ENCODE measurements at regions of chr3 and their contacts with region 1.

Region 1: GRCh38 chr3:119769394-119770149 is 12.3 kb upstream of the NR1I2 start:
- DNase-seq: peak; percentile 99
- H3K4me3 ChIP-seq: peak overlapping the region in 1 of 3 experiments; percentile 51
- H3K27ac ChIP-seq: peak overlapping the region; percentile 100
- H3K4me1 ChIP-seq: peaks cover 25% of the 10 kb centered on the region
- H3K27me3 ChIP-seq: no peaks in the 10 kb centered on the region
- CTCF ChIP-seq: no peak
- POLR2A ChIP-seq: peak; percentile 48

Region 2: DNA sequence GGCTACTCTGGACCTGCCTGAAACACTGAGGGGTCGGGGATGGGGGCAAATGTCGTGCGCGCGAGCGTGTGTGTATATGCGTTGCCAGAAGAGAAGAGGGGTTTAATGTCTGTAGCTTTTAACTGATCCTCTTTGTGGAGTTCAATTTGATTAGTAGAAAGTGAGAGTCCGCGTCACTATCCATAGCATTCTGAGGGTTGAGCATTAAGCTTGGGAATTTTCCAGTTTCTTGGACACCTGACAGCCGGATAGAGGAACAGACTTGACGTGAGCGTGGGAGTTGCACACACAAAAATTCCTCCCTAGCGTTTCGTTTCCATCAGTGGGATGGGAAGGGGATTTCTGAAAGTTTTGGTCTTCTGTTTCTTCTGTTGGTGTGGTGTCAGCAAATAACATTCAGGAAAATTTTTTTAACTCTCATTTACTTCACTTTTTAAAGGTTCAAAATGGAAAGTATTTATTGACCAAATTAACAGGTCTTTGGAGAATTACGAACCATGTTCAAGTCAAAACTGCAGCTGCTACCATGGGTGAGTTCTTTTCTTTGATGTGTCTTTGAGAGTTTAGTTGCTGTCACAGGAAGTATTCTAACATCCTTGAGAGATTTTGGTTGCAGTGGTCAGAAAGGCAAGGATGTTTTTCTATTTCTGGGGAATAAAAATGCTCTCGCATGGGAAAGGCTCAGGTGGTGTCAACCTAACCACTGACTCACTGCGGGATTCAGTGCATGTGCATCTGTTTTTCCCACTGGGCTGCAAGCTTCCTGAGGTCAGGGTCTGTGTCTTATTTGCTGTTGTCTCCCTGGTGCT is 300.0 kb before region 1 on chr3:
- CTCF ChIA-PET with region 1: no interaction called
- POLR2A ChIA-PET with region 1: no interaction called
- dilution Hi-C with region 1: no loop called
- intact Hi-C with region 1: loop called (anchors 1 kb)
- DNase-seq: peak; percentile 62
- H3K4me3 ChIP-seq: peak overlapping the region; percentile 78 to 86 (median 80)
- H3K27ac ChIP-seq: peak overlapping the region; percentile 19
- H3K4me1 ChIP-seq: peaks cover 13% of the 10 kb centered on the region
- H3K27me3 ChIP-seq: no peaks in the 10 kb centered on the region
- CTCF ChIP-seq: no peak
- POLR2A ChIP-seq: no peak

Region 3: GRCh38 chr3:119637679-119638525 is 131.7 kb before region 1 on chr3:
- CTCF ChIA-PET with region 1: no interaction called
- POLR2A ChIA-PET with region 1: interaction called, 13 read pairs
- dilution Hi-C with region 1: no loop called
- intact Hi-C with region 1: no loop called
- DNase-seq: peak; percentile 91
- H3K4me3 ChIP-seq: no peak overlapping the region
- H3K27ac ChIP-seq: peak overlapping the region; percentile 80
- H3K4me1 ChIP-seq: peaks cover 34% of the 10 kb centered on the region
- H3K27me3 ChIP-seq: no peaks in the 10 kb centered on the region
- CTCF ChIP-seq: no peak
- POLR2A ChIP-seq: no peak

Region 4: DNA sequence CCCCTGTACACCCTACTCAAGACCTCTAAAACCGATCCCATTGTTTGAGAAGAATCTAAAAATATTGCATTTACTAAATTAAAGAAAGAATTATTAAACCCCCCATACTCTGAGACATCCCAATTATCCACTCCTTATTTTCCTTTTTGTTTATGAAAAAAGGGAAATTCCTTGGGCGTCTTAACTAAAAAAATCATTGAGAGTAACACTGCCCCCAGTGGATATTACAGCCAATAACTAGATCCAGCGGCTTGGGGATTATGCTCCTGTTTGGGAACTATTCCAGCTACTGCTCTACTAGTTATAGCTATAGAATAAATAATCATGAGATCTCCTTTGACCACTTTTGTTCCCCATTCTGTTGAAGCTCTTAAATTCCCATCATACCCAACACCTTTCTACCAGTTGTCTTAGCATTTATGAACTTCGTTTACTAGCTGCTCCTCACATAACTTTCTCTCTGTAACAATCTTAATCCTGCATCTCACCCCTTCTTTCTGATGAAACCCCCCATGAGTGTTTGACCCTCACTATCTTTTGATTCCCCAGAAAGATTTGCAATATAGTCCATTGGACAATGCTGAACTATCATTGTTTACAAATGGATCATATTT is 79.4 kb before region 1 on chr3:
- CTCF ChIA-PET with region 1: interaction called, 4 read pairs
- POLR2A ChIA-PET with region 1: no interaction called
- dilution Hi-C with region 1: no loop called
- intact Hi-C with region 1: loop called (anchors 1 kb)
- DNase-seq: peak; percentile 52
- H3K4me3 ChIP-seq: no peak overlapping the region
- H3K27ac ChIP-seq: no peak overlapping the region
- H3K4me1 ChIP-seq: no peaks in the 10 kb centered on the region
- H3K27me3 ChIP-seq: no peaks in the 10 kb centered on the region
- CTCF ChIP-seq: peak; percentile 38 to 45
- POLR2A ChIP-seq: no peak

Region 5: DNA sequence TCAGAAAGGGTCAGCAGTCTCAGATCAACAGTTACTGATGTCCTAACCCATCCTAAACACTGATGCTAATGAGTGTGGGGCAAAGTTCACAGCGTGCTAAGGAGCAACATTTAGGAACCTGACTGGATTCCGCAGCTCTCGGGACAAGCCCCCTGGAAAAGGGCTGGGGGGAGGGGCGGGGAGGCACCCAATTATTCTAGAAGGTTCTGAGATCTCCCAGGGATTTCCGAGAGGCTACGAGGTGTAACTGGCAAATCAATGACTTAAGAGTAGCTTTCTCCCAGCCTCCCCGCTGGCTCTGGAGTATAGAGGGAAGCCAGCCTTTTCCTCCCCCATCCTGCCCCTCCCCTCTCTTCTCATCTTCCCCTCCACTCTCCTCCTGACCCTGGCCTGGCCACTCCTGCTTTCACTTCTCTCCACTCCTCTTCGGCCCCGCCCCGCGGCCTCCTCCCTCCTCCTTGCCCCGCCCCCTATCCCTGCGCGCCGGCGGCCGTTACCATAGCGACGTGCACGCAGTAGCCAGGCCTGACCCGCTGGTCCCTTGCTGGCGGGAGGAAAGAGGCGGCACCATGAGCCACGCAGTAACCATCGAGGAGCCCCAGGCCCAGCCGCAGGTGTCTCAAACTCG is 66.9 kb before region 1 on chr3 and contains the start of gene CFAP91:
- CTCF ChIA-PET with region 1: no interaction called
- POLR2A ChIA-PET with region 1: no interaction called
- dilution Hi-C with region 1: no loop called
- intact Hi-C with region 1: loop called (anchors 1 kb)
- DNase-seq: peak; percentile 94
- H3K4me3 ChIP-seq: peak within 1 kb of the TSS; percentile 20 to 43 (median 29)
- H3K27ac ChIP-seq: no peak within 1 kb of the TSS
- H3K4me1 ChIP-seq: peaks cover 7% of the 10 kb centered on the region
- H3K27me3 ChIP-seq: peaks cover 0 to 4% of the 10 kb centered on the region in 2 experiments
- CTCF ChIP-seq: no peak
- POLR2A ChIP-seq: no peak
- total RNA-seq, gene CFAP91: 0.40 and 0.51 TPM in 2 replicates

Region 6: DNA sequence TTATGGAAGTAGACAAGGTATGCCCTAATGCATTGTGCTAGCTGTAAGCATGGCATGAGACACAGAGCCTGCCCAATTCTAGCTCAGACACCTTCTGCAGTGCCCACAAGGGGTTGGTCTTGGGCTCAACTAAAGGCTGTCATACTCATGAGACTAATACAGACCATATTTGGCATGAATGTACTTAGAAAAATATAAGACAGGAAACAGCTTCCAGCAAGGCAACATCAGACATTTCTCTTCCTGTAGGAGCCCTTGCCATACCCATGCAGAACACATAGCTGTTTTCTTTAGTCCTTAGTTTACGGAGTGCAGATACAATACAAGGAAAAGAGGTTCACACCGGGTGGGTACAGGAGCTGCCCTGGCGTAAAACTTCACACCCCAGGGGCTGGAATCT is 18.1 kb before region 1 on chr3:
- CTCF ChIA-PET with region 1: interaction called, 3 read pairs
- POLR2A ChIA-PET with region 1: interaction called, 3 read pairs
- dilution Hi-C with region 1: no loop called
- intact Hi-C with region 1: loop called (anchors 1 kb)
- DNase-seq: peak; percentile 93
- H3K4me3 ChIP-seq: no peak overlapping the region
- H3K27ac ChIP-seq: peak overlapping the region; percentile 68
- H3K4me1 ChIP-seq: peaks cover 19% of the 10 kb centered on the region
- H3K27me3 ChIP-seq: no peaks in the 10 kb centered on the region
- CTCF ChIP-seq: peak in 1 of 2 donors; percentile 9
- POLR2A ChIP-seq: no peak

Region 7: DNA sequence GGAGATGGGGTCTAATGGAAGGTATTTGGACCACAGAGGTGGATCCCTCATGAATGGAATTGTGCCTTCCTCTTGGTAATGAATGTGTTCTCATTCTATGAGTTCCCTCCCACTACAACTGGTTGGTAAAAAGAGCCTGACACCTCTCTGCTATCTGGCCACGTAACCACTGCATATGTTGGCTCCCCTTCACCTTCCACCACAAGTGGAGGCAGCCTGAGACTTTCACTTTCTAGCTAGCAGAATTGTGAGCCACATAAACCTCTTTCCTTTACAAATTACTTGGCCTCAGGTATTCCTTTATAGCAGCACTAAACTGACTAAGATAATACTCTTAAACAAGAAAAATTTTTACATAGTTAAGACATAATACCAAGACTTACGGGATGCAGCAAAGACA is 167.7 kb after region 1 on chr3:
- CTCF ChIA-PET with region 1: no interaction called
- POLR2A ChIA-PET with region 1: no interaction called
- dilution Hi-C with region 1: no loop called
- intact Hi-C with region 1: no loop called
- DNase-seq: no peak
- H3K4me3 ChIP-seq: no peak overlapping the region
- H3K27ac ChIP-seq: no peak overlapping the region
- H3K4me1 ChIP-seq: no peaks in the 10 kb centered on the region
- H3K27me3 ChIP-seq: no peaks in the 10 kb centered on the region
- CTCF ChIP-seq: no peak
- POLR2A ChIP-seq: no peak

Region 8: GRCh38 chr3:120062474-120062873 is 292.9 kb after region 1 on chr3:
- CTCF ChIA-PET with region 1: no interaction called
- POLR2A ChIA-PET with region 1: no interaction called
- dilution Hi-C with region 1: no loop called
- intact Hi-C with region 1: no loop called
- DNase-seq: peak; percentile 17
- H3K4me3 ChIP-seq: no peak overlapping the region
- H3K27ac ChIP-seq: no peak overlapping the region
- H3K4me1 ChIP-seq: no peaks in the 10 kb centered on the region
- H3K27me3 ChIP-seq: no peaks in the 10 kb centered on the region
- CTCF ChIP-seq: no peak
- POLR2A ChIP-seq: no peak